ENCODE measurements at regions of chr19 and their contacts with region 1.

Region 1: DNA sequence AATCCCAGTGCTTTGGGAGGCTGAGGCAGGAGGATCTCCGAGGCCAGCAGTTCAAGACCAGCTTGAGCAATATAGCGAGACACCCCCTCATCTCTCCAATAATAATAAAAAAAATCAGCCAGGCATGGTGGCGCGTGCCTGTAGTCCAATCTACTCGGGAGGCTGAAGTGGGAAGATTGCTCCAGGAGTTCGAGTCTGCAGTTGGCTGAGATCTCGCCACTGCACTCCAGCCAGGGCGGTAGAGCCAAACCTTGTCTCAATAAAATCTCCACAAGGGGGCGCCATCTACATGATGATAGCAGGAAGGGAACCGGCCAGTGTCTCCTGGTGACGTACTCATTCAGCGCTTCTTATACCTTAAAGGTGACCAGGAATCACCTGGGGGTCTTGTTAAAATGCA is 13.6 kb upstream of the C5AR1 start:
- DNase-seq: peak in 8 of 10 donors; percentile 28 to 85 (median 70)
- H3K4me3 ChIP-seq: no peak overlapping the region
- H3K27ac ChIP-seq: no peak overlapping the region
- H3K27me3 ChIP-seq: no peaks in the 10 kb centered on the region
- CTCF ChIP-seq: peak; percentile 69 to 90 (median 81)

Region 2: DNA sequence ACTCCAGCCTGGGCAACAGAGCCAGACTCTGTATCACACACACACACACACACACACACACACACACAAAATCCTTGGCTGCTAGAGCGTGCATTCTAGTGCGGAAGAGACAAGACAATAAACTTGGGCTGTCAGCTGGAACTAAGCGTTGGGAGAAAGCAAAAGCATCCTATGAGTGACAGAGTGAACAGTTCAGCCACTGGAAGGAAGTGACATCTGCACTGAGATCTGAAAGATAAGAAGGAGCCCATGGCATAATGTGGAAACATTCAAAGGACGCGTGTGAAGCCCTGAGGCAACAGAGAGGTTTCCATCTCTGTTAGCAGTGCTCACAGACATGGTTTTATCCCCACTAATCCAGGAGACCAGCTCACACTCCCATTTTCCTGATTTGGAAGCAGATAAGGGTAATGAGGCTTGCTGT is 504.1 kb before region 1 on chr19:
- intact Hi-C with region 1: no loop called
- DNase-seq: no peak
- H3K4me3 ChIP-seq: no peak overlapping the region
- H3K27ac ChIP-seq: no peak overlapping the region
- H3K27me3 ChIP-seq: peaks cover 0 to 38% (median 11%) of the 10 kb centered on the region in 45 donors
- CTCF ChIP-seq: no peak

Region 3: GRCh38 chr19:47391510-47392223 is 95.6 kb after region 1 on chr19:
- intact Hi-C with region 1: loop called (anchors 2 to 5 kb)
- DNase-seq: peak in 9 of 10 donors; percentile 71 to 81 (median 77)
- H3K4me3 ChIP-seq: peak overlapping the region in 11 of 59 donors; percentile 2 to 50 (median 19)
- H3K27ac ChIP-seq: no peak overlapping the region
- H3K27me3 ChIP-seq: no peaks in the 10 kb centered on the region
- CTCF ChIP-seq: peak; percentile 73 to 97 (median 92)

Region 4: DNA sequence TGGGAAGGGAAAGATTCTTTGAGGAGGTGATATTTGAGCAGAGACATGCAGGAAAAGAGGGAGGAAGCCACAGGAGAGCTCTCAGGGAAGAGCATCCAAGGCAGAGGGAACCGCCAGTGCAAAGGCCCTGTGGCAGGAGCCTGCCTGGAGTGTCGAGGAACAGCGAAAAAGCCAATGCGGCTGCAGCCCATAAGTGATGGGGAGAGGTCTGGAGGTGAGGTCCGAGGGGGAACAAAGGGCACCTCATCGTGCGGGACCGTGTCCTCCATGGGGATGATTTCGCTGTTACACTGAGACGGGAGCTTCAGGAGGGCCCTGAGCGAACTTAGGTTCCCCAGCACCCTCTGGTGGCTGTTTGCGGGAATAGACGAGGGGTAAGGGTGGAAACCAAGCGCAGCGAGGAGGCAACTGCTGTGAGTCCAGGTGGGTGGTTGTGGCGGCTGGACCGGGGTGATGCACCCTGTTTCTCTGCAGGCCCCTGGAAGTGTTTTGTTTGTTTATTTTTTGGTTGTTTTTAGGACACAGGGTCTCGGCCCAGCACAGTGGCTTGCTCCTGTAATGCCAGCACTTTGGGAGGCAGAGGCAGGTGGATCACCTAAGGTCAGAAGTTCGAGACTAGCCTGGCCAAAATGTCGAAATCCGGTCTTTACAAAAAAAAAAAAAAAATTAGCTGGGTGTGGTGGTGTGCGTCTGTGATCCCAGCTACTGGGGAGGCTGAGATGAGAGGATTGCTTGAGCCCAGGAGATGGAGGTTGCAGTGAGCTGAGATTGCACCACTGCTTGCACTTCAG is 411.3 kb after region 1 on chr19:
- intact Hi-C with region 1: loop called in 1 of 2 experiments (anchors 10 kb)
- DNase-seq: peak; percentile 56 to 79 (median 68)
- H3K4me3 ChIP-seq: peak overlapping the region in 7 of 59 donors; percentile 2 to 28 (median 21)
- H3K27ac ChIP-seq: peak overlapping the region in 1 of 59 donors; percentile 53
- H3K27me3 ChIP-seq: peaks cover 0 to 2% (median 0%) of the 10 kb centered on the region in 45 donors
- CTCF ChIP-seq: peak; percentile 51 to 92 (median 80)

Measured in dorsolateral prefrontal cortex (tissue), 120 donors.